ENCODE measurements at regions of chr22 and their contacts with region 1.

Region 1: DNA sequence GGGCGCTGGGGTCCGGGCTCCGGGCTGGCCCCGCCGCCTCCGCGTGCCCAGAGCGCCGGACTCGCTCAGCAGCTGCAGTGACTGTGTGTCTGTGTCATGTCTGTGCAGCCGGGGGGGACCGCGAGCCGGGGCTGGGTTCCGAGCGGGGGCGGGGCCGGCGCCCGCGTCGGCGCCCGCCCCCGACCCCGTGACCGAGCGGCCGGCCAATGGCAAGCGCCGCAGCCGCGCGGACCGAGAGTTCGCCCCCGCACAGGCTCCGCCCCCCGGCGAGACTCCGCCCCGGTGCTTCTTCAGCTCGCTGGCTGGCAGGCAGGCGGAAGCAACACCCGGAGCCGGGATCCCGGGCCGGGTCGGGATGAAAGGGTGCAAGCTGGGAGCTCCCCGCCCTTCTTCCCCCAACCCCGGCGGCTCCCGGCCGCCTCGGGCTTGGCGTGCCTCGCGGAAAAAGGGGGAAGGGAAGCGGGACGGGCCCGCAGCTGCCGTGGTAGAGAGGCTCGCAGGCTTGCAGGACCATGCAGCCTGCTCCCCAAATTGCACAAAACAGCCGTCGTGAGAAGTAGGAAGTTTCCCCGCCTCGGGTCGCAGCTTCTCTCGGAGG is 750 bp upstream of the LARGE1 start:
- DNase-seq: peak; percentile 98
- H3K4me3 ChIP-seq: peak overlapping the region; percentile 53 to 73
- H3K27ac ChIP-seq: peak overlapping the region; percentile 72 to 76
- H3K4me1 ChIP-seq: no peaks in the 10 kb centered on the region
- H3K27me3 ChIP-seq: no peaks in the 10 kb centered on the region
- CTCF ChIP-seq: no peak
- POLR2A ChIP-seq: peak; percentile 86

Region 2: GRCh38 chr22:33302049-33302545 is 618.9 kb before region 1 on chr22:
- intact Hi-C with region 1: loop called (anchors 10 kb)
- DNase-seq: peak; percentile 74
- H3K4me3 ChIP-seq: no peak overlapping the region
- H3K27ac ChIP-seq: no peak overlapping the region
- H3K4me1 ChIP-seq: peaks cover 8% of the 10 kb centered on the region
- H3K27me3 ChIP-seq: no peaks in the 10 kb centered on the region
- CTCF ChIP-seq: peak; percentile 60 to 89 (median 84)
- POLR2A ChIP-seq: no peak

Region 3: GRCh38 chr22:33519071-33519973 is 401.7 kb before region 1 on chr22:
- intact Hi-C with region 1: loop called (anchors 2 kb)
- DNase-seq: peak; percentile 56
- H3K4me3 ChIP-seq: no peak overlapping the region
- H3K27ac ChIP-seq: no peak overlapping the region
- H3K4me1 ChIP-seq: no peaks in the 10 kb centered on the region
- H3K27me3 ChIP-seq: no peaks in the 10 kb centered on the region
- CTCF ChIP-seq: peak; percentile 15 to 69 (median 60)
- POLR2A ChIP-seq: no peak

Region 4: GRCh38 chr22:33658775-33659174 is 262.3 kb before region 1 on chr22:
- intact Hi-C with region 1: loop called (anchors 5 kb)
- DNase-seq: peak; percentile 7
- H3K4me3 ChIP-seq: no peak overlapping the region
- H3K27ac ChIP-seq: peak overlapping the region; percentile 28 to 51
- H3K4me1 ChIP-seq: no peaks in the 10 kb centered on the region
- H3K27me3 ChIP-seq: no peaks in the 10 kb centered on the region
- CTCF ChIP-seq: no peak
- POLR2A ChIP-seq: no peak

Region 5: DNA sequence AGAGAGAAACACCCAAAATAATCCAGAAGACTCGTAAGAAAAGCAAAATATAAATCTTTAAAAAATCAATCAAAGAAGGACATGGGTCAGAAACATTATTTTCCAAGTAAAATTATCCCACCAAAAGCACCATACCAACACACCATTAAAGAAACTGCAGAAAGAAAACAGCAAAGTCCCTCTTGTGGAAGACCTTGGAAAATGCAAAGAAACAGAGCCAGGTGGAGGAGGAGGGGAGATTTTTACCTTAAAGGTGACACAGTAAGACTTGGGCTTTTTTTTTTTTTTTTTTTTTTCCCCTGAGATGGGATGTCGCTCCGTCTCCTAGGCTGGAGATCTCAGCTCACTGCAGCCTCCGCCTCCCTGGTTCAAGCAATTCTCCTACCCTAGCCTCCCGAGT is 124.5 kb before region 1 on chr22:
- intact Hi-C with region 1: loop called (anchors 10 kb)
- DNase-seq: no peak
- H3K4me3 ChIP-seq: no peak overlapping the region
- H3K27ac ChIP-seq: no peak overlapping the region
- H3K4me1 ChIP-seq: no peaks in the 10 kb centered on the region
- H3K27me3 ChIP-seq: no peaks in the 10 kb centered on the region
- CTCF ChIP-seq: no peak
- POLR2A ChIP-seq: no peak

Region 6: GRCh38 chr22:33853200-33854097 is 67.6 kb before region 1 on chr22:
- intact Hi-C with region 1: no loop called
- DNase-seq: peak; percentile 89
- H3K4me3 ChIP-seq: peak overlapping the region; percentile 19 to 29
- H3K27ac ChIP-seq: peak overlapping the region; percentile 78 to 81
- H3K4me1 ChIP-seq: peaks cover 11% of the 10 kb centered on the region
- H3K27me3 ChIP-seq: no peaks in the 10 kb centered on the region
- CTCF ChIP-seq: no peak
- POLR2A ChIP-seq: no peak

Region 7: GRCh38 chr22:34105461-34106062 is 184.5 kb after region 1 on chr22:
- intact Hi-C with region 1: loop called (anchors 5 kb)
- DNase-seq: peak; percentile 51
- H3K4me3 ChIP-seq: no peak overlapping the region
- H3K27ac ChIP-seq: no peak overlapping the region
- H3K4me1 ChIP-seq: no peaks in the 10 kb centered on the region
- H3K27me3 ChIP-seq: no peaks in the 10 kb centered on the region
- CTCF ChIP-seq: peak in 3 of 4 experiments; percentile 45 to 62 (median 60)
- POLR2A ChIP-seq: no peak

Measured in prostate gland (tissue), 2 donors.